SK-N-SH (cell line): ENCODE measurements at regions of chr10 and their contacts with region 1.

Region 1: GRCh38 chr10:101830322-101831168 is 12.3 kb upstream of the OGA start:
- DNase-seq: peak; percentile 96
- H3K4me3 ChIP-seq: peak overlapping the region; percentile 45 to 49
- H3K27ac ChIP-seq: peak overlapping the region; percentile 41 to 87; a peak in 3 of 4 replicates
- H3K4me1 ChIP-seq: peaks cover 14 to 35% of the 10 kb centered on the region in 2 experiments; a peak in 3 of 4 replicates
- H3K27me3 ChIP-seq: no peaks in the 10 kb centered on the region
- CTCF ChIP-seq: no peak
- EP300 ChIP-seq: no peak
- RAD21 ChIP-seq: no peak

Region 2: GRCh38 chr10:101818119-101818871 is 12.2 kb before region 1 on chr10 and contains the start of gene OGA:
- CTCF ChIA-PET with region 1: interaction called, 7 read pairs
- POLR2A ChIA-PET with region 1: interaction called, 10 read pairs
- DNase-seq: peak; percentile 96
- H3K4me3 ChIP-seq: peak within 1 kb of the TSS; percentile 88 to 96
- H3K27ac ChIP-seq: peak within 1 kb of the TSS; percentile 81 to 97
- H3K4me1 ChIP-seq: peaks cover 6 to 21% of the 10 kb centered on the region in 2 experiments; a peak in 3 of 4 replicates
- H3K27me3 ChIP-seq: no peaks in the 10 kb centered on the region
- CTCF ChIP-seq: no peak
- EP300 ChIP-seq: peak in 1 of 2 experiments; percentile 53; a peak in 1 of 4 replicates
- RAD21 ChIP-seq: no peak
- polyA plus RNA-seq, gene OGA: 24.8 and 36.6 TPM in 2 replicates

Region 3: DNA sequence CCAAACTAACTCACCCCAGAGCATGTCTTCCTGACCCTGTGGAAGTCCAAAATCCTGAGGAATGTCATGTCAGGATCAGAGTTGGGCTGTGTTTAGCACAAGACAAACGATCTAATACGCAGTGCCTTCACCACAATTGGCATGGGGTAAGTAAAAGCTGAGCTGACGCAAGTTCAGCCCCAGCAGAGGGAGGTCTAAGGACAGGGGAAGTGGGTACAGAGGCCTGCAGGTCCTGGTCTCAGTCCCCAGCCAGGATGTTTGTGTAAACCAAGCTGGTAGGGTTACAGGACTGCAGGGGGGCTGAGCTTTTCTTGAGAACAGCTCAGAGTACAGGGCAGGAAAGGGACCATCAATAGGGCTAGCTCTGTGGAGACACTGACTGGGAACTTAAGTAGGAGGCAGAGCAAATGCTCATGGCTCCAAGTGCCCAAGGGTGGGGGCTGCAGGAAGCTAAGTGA is 18.4 kb after region 1 on chr10:
- CTCF ChIA-PET with region 1: interaction called, 73 read pairs
- POLR2A ChIA-PET with region 1: no interaction called
- DNase-seq: no peak
- H3K4me3 ChIP-seq: no peak overlapping the region
- H3K27ac ChIP-seq: peak overlapping the region in 1 of 2 experiments; percentile 20; a peak in 1 of 4 replicates
- H3K4me1 ChIP-seq: peaks cover 0 to 16% of the 10 kb centered on the region in 2 experiments; a peak in 1 of 4 replicates
- H3K27me3 ChIP-seq: no peaks in the 10 kb centered on the region
- CTCF ChIP-seq: no peak
- EP300 ChIP-seq: no peak
- RAD21 ChIP-seq: no peak

Region 4: GRCh38 chr10:102112210-102112817 is 281.8 kb after region 1 on chr10:
- CTCF ChIA-PET with region 1: no interaction called
- POLR2A ChIA-PET with region 1: no interaction called
- DNase-seq: peak; percentile 53
- H3K4me3 ChIP-seq: peak overlapping the region; percentile 72 to 84; a peak in 3 of 4 replicates
- H3K27ac ChIP-seq: peak overlapping the region in 1 of 2 experiments; percentile 36; a peak in 2 of 4 replicates
- H3K4me1 ChIP-seq: peaks cover 28 to 34% of the 10 kb centered on the region in 2 experiments
- H3K27me3 ChIP-seq: no peaks in the 10 kb centered on the region
- CTCF ChIP-seq: peak; percentile 40
- EP300 ChIP-seq: no peak
- RAD21 ChIP-seq: no peak

Region 5: DNA sequence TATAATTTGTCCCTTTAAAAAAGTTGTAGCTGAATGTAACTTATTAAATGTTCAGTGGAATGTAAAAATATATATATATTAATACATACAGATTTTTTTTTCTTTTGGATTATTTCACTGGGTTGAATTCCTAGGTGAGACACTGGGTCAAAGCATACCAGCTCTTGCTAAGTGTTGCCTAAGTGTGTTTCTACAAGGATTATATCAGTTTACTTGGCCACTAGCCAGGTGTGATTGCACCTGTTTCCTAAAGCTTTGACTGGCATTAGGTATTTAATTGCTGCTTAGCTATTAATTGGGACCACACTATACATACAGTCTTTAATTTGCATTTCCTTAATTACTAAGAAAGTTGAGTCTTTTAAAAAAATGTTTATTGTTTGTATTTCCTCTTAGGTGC is 390.1 kb after region 1 on chr10:
- CTCF ChIA-PET with region 1: no interaction called
- POLR2A ChIA-PET with region 1: no interaction called
- DNase-seq: no peak
- H3K4me3 ChIP-seq: no peak overlapping the region
- H3K27ac ChIP-seq: no peak overlapping the region
- H3K4me1 ChIP-seq: peaks cover 0 to under 1% of the 10 kb centered on the region in 2 experiments; a peak in 2 of 4 replicates
- H3K27me3 ChIP-seq: no peaks in the 10 kb centered on the region
- CTCF ChIP-seq: no peak
- EP300 ChIP-seq: no peak
- RAD21 ChIP-seq: no peak